Calu3 (cell line): ENCODE measurements at regions of chr15 and their contacts with region 1.

Region 1: DNA sequence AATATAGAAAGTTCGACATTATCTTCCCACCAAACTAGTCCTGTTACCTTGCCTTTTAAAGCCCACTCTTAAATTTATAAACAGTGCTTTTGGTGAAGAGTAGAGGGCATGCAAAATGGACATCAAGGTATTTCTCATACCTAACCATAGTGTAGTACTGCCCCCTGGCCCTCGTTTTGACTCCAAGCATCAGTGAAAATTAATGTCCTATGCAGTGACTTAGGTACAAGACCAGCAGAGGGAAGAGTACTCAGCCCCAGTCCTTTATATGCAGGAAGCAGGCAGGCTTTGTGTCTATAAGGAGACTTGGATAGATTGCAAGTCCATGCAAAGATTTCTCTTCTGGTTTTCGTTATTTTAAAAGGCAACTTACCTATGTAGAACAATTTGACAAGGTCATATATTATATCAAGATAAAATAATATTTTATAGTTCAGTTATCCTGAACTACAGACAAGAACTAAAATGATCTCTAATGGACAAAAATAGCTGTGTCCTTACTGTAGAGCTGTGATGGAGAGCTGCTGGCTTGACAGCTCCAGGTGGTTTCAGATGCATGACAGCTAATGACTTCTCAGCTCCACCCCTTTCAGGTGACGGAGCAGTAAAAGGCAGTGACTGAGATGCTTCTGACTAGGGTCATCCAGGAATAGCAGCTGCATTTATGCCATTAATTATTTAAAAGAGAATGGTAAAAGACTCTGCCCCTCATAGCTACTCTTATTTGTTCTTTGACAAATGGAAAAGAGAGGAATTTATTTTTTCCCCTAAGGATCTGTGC is 646.1 kb downstream of the SQOR start:
- DNase-seq: peak; percentile 33
- H3K4me3 Mint-ChIP-seq: no peak overlapping the region
- H3K27ac Mint-ChIP-seq: no peak overlapping the region
- H3K4me1 Mint-ChIP-seq: no peaks in the 10 kb centered on the region
- H3K27me3 Mint-ChIP-seq: no peaks in the 10 kb centered on the region
- CTCF ChIP-seq: no peak

Region 2: DNA sequence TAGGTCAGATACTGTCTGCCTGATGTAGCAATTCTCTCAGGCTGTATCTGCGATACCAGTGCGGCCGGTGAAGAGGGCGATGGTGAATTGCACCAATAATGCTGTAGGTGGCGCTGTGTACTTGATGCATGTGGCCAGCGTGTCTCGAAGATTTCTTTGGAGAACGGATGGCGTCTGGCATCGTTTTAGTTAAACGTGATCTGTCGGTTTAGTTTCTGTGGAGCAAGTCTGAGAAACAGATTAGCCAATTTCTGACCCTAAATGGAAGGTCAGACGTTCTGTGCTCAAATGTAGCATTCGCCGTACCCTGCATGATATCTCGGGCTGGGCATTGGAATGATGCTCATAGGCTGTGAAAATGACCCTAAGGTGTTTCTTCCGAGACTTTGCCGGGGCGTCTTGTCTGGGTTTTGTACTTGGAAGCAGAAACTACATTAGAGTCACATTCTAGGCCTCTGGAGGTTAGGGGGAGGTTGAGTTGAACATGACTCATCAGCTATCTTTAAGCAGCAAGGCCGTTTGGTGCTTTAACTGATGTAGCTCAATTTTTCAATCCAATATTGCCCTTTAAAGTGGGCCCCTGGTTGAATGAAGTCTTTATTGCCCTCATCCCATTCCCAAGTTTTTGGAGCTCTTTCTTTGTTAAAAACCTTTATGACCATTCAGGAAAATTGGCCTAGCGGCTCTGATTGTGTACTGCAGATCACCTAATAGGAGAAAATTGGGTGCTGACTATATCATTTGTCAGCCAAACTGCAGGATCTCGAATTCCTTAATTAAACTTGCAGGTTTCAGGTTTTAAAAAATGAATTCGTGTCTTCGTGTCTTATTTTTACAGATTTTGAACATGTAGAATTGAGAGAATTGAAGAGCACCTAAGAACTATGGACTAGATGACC is 566.1 kb before region 1 on chr15:
- CTCF ChIA-PET with region 1: no interaction called
- intact Hi-C with region 1: loop called (anchors 2 kb)
- DNase-seq: peak; percentile 67
- H3K4me3 Mint-ChIP-seq: peak overlapping the region; percentile 17
- H3K27ac Mint-ChIP-seq: no peak overlapping the region
- H3K4me1 Mint-ChIP-seq: no peaks in the 10 kb centered on the region
- H3K27me3 Mint-ChIP-seq: peaks cover 34% of the 10 kb centered on the region
- CTCF ChIP-seq: peak; percentile 50

Region 3: GRCh38 chr15:45795440-45796069 is 485.4 kb before region 1 on chr15:
- CTCF ChIA-PET with region 1: no interaction called
- intact Hi-C with region 1: loop called (anchors 2 kb)
- DNase-seq: peak; percentile 59
- H3K4me3 Mint-ChIP-seq: no peak overlapping the region
- H3K27ac Mint-ChIP-seq: no peak overlapping the region
- H3K4me1 Mint-ChIP-seq: no peaks in the 10 kb centered on the region
- H3K27me3 Mint-ChIP-seq: peaks cover 41% of the 10 kb centered on the region
- CTCF ChIP-seq: peak; percentile 40

Region 4: DNA sequence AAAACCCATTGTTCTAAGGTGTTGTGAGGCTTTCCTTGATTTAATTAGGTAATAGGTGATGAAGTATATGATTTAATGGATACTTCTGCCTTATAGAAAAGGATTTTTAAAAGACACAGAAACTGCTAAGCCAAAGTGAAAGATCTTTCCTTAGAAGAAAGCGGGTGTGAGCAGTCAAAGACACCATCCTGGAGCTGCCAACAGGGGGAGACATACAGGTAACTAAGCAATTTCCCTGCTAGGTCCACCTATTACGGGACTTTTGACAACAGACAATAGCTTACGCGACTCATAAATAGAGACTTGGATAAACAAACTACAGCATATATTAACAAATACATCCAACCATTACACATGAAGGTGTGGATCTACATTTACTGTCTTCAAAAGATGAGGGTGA is 23.4 kb after region 1 on chr15:
- CTCF ChIA-PET with region 1: no interaction called
- intact Hi-C with region 1: no loop called
- DNase-seq: no peak
- H3K4me3 Mint-ChIP-seq: no peak overlapping the region
- H3K27ac Mint-ChIP-seq: no peak overlapping the region
- H3K4me1 Mint-ChIP-seq: no peaks in the 10 kb centered on the region
- H3K27me3 Mint-ChIP-seq: no peaks in the 10 kb centered on the region
- CTCF ChIP-seq: peak; percentile 17

Region 5: DNA sequence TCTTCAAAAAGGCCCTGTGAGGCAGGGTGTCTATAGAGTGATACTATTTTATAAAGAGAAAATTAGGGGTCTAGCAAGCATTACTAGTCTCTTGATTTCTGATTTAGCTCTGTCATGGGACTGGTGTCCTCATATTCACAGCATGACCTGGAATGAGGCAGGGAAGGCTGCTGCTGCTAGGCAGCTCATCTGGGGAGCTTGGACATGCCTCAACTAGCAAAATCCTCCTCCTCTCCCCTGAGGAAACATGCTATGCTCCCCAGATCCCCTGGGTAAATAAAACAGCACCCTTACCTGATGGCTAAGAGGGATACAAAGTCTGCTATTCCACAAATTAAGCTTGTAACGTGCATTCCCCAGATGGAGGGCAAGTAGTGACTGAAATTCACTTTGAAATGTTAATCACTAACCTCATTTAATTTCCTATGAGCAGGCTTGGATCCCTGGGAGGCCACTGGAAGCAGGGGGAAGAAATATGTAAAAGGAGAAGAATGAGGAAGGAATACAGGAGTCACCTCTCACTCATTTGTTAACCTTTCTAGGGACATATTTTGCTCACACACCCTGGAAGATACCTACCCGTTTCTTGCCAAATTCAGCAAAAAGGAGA is 63.3 kb after region 1 on chr15:
- CTCF ChIA-PET with region 1: no interaction called
- intact Hi-C with region 1: no loop called
- DNase-seq: no peak
- H3K4me3 Mint-ChIP-seq: no peak overlapping the region
- H3K27ac Mint-ChIP-seq: no peak overlapping the region
- H3K4me1 Mint-ChIP-seq: no peaks in the 10 kb centered on the region
- H3K27me3 Mint-ChIP-seq: no peaks in the 10 kb centered on the region
- CTCF ChIP-seq: no peak

Region 6: DNA sequence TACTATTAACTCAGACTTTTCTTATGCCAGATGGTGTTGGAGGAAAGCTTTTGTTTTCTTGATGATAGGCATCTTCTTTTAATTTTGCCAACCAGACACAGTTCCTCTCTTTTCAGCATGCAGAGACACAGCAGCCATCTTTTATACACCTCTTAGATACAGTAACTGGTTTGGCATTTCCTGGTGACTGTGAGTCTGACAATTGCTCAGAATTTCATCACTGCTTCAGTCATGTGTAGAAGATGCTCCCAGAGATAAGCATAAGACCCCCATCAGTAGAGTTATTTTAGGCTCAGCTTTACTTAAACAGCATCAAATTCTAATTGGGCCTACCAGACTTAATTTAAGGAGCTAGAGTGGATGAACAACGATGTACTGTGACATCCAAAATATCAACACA is 132.8 kb after region 1 on chr15:
- CTCF ChIA-PET with region 1: no interaction called
- intact Hi-C with region 1: no loop called
- DNase-seq: no peak
- H3K4me3 Mint-ChIP-seq: no peak overlapping the region
- H3K27ac Mint-ChIP-seq: no peak overlapping the region
- H3K4me1 Mint-ChIP-seq: no peaks in the 10 kb centered on the region
- H3K27me3 Mint-ChIP-seq: no peaks in the 10 kb centered on the region
- CTCF ChIP-seq: no peak

Region 7: DNA sequence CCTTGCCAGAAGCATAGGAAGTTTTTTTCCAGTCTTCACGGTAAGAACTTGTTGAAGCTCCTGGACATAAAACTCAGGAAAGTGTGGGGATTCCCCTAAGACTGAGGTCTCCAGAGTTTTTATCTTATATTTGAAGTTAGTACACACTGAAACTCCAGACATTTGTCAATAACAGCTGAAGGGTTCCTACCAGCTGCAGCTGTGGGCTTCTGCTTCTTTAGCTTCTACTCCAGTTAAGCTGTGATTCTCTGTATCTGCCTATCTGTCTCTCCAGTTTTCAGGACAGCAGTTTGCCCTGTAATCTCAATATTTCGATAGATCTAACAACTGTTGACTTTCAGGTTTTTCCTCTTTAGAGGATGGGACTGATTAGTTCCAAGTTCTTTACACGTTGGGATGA is 470.4 kb after region 1 on chr15:
- CTCF ChIA-PET with region 1: no interaction called
- intact Hi-C with region 1: no loop called
- DNase-seq: no peak
- H3K4me3 Mint-ChIP-seq: no peak overlapping the region
- H3K27ac Mint-ChIP-seq: no peak overlapping the region
- H3K4me1 Mint-ChIP-seq: no peaks in the 10 kb centered on the region
- H3K27me3 Mint-ChIP-seq: no peaks in the 10 kb centered on the region
- CTCF ChIP-seq: no peak